ENCODE measurements at regions of chr19 and their contacts with region 1.

Region 1: DNA sequence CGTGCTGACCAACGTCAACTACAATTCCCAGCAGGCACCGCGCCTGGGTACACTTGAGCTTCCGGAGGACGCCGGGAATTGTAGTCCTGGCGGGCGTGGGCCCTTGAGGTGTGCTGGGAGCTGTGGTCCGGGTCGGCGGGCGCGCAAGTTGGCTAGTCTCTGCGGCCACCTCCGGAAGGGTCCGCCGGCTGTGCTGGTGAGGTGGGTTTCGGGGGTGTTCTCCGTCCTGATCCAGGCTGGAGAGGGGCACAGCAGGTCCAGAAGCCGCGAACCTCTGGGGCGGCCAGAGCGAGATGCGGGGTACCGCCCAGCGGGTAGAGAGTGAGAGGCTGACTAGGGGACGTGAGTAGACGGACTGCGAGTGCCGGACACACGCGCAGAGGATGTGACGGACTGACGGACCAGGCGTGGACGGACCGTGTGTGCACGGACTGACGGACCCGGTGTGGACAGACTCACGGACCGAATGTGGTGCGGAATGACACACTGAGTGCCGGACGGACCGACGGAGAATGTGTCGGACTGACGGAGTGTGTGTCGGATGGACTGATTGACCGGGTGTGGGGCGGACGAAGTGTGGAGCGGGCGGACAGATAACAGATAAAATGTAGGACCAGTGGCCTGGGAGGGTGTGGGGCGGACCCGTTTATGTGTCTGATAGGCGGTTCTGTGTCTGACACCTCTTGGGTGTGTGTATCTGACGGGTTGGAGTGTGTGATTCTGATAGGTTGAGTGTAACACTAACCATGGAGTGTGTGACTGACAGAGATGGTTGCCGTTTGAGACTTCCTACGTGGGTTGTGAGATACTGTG is at the start of gene ZSCAN22:
- DNase-seq: peak; percentile 65 to 89 (median 78)
- ATAC-seq: peak; percentile 90
- H3K4me3 ChIP-seq: peak within 1 kb of the TSS; percentile 95
- H3K4me3 Mint-ChIP-seq: no peak within 1 kb of the TSS
- H3K27ac ChIP-seq: peak within 1 kb of the TSS; percentile 72
- H3K27ac Mint-ChIP-seq: no peak within 1 kb of the TSS
- H3K4me1 ChIP-seq: peaks cover 14 to 16% of the 10 kb centered on the region in 2 donors
- H3K4me1 Mint-ChIP-seq: peaks cover 0 to 10% (median 6%) of the 10 kb centered on the region in 7 donors
- H3K27me3 ChIP-seq: no peaks in the 10 kb centered on the region
- H3K27me3 Mint-ChIP-seq: no peaks in the 10 kb centered on the region
- total RNA-seq, gene ZSCAN22: 1.1 to 6.0 (median 4.5) TPM

Region 2: GRCh38 chr19:58227964-58228584 is 99.0 kb before region 1 on chr19:
- CTCF ChIA-PET with region 1: no interaction called
- POLR2A ChIA-PET with region 1: no interaction called
- intact Hi-C with region 1: no loop called
- DNase-seq: no peak
- ATAC-seq: no peak
- H3K4me3 ChIP-seq: peak overlapping the region; percentile 86
- H3K4me3 Mint-ChIP-seq: peak overlapping the region; percentile 89 to 95 (median 94)
- H3K27ac ChIP-seq: peak overlapping the region; percentile 73
- H3K27ac Mint-ChIP-seq: peak overlapping the region in 8 of 9 donors; percentile 76 to 94 (median 84)
- H3K4me1 ChIP-seq: peaks cover 10% of the 10 kb centered on the region in 2 donors
- H3K4me1 Mint-ChIP-seq: peaks cover 19 to 36% (median 27%) of the 10 kb centered on the region in 7 donors
- H3K27me3 ChIP-seq: no peaks in the 10 kb centered on the region
- H3K27me3 Mint-ChIP-seq: no peaks in the 10 kb centered on the region

Region 3: GRCh38 chr19:58346961-58347931 is 20.1 kb after region 1 on chr19:
- CTCF ChIA-PET with region 1: no interaction called
- POLR2A ChIA-PET with region 1: interaction called, 3 read pairs
- intact Hi-C with region 1: loop called (anchors 1 kb)
- DNase-seq: peak; percentile 50 to 78 (median 68)
- ATAC-seq: peak; percentile 98
- H3K4me3 ChIP-seq: peak overlapping the region; percentile 77
- H3K4me3 Mint-ChIP-seq: peak overlapping the region; percentile 86 to 97 (median 92)
- H3K27ac ChIP-seq: peak overlapping the region; percentile 73
- H3K27ac Mint-ChIP-seq: peak overlapping the region; percentile 71 to 93 (median 85)
- H3K4me1 ChIP-seq: peaks cover 0 to 7% of the 10 kb centered on the region in 2 donors
- H3K4me1 Mint-ChIP-seq: peaks cover 23 to 36% (median 29%) of the 10 kb centered on the region in 7 donors
- H3K27me3 ChIP-seq: no peaks in the 10 kb centered on the region
- H3K27me3 Mint-ChIP-seq: peaks cover 0 to 5% (median 0%) of the 10 kb centered on the region in 5 donors

Region 4: DNA sequence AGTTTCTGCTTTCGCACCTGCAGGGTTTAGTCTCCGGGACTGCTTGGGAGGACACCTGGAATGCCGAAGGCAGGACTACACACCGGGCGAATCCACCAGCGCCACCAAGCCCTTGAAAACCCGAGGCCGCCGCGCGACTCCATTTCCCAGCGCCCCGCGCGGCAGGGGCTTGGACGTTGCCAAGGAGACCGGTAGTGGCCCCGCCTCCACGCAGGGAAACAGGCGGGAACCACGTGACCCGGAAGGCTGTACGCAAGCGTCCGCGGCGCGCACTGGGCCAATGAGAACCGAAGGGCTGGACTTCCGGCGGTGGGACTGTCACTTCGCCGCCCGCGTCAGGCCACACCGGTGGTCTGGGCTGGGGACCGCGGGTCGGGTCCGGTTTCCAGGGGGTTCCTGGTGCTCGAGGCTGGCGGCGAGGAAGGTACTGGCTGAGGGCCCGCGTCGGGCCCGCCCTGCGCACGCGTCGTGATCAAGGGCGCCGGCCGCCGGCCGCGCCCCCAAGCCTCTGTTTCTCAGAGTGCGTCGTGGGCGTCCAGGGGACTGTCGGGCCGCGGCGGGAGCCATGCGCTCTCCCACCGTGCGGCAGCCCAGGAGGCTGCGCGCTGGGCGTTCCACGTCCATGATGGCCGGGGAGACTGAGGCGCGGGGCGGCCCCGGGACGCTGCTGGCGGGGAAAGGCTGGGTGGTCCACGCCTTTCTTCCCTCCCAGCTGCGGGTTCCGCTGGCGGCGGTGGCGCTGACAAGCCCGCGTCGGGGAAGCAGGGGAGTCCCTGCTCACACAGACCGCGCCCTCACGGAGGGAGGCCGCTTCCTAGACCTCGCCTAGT is 139.9 kb after region 1 on chr19 and contains the start of gene ZNF324:
- CTCF ChIA-PET with region 1: no interaction called
- POLR2A ChIA-PET with region 1: no interaction called
- intact Hi-C with region 1: loop called (anchors 1 to 2 kb)
- DNase-seq: peak; percentile 92 to 97 (median 95)
- ATAC-seq: peak; percentile 98
- H3K4me3 ChIP-seq: peak within 1 kb of the TSS; percentile 92
- H3K4me3 Mint-ChIP-seq: peak within 1 kb of the TSS; percentile 80 to 89 (median 86)
- H3K27ac ChIP-seq: peak within 1 kb of the TSS; percentile 99
- H3K27ac Mint-ChIP-seq: peak within 1 kb of the TSS in 8 of 9 donors; percentile 67 to 91 (median 85)
- H3K4me1 ChIP-seq: peaks cover 7 to 11% of the 10 kb centered on the region in 2 donors
- H3K4me1 Mint-ChIP-seq: peaks cover 14 to 27% (median 22%) of the 10 kb centered on the region in 7 donors
- H3K27me3 ChIP-seq: no peaks in the 10 kb centered on the region
- H3K27me3 Mint-ChIP-seq: peaks cover 0 to 3% (median 0%) of the 10 kb centered on the region in 5 donors
- total RNA-seq, gene ZNF324: 14.2 to 28.0 (median 23.4) TPM

Measured in naive thymus-derived CD4-positive, alpha-beta T cell (primary cell).